ENCODE measurements at regions of chr20 and their contacts with region 1.

Region 1: GRCh38 chr20:32789896-32790750 is 27.9 kb downstream of the DNMT3B start:
- DNase-seq: peak; percentile 50 to 77 (median 68)
- ATAC-seq: peak; percentile 84
- H3K4me3 ChIP-seq: no peak overlapping the region
- H3K4me3 Mint-ChIP-seq: no peak overlapping the region
- H3K27ac ChIP-seq: no peak overlapping the region
- H3K27ac Mint-ChIP-seq: peak overlapping the region in 6 of 9 donors; percentile 6 to 86 (median 16)
- H3K4me1 ChIP-seq: peaks cover 3 to 36% of the 10 kb centered on the region in 2 donors
- H3K4me1 Mint-ChIP-seq: peaks cover 14 to 47% (median 38%) of the 10 kb centered on the region in 7 donors
- H3K27me3 ChIP-seq: no peaks in the 10 kb centered on the region
- H3K27me3 Mint-ChIP-seq: no peaks in the 10 kb centered on the region

Region 2: GRCh38 chr20:32819992-32820710 is 30.0 kb after region 1 on chr20:
- CTCF ChIA-PET with region 1: interaction called, 5 read pairs
- POLR2A ChIA-PET with region 1: interaction called, 11 read pairs
- intact Hi-C with region 1: loop called in 1 of 2 experiments (anchors 1 kb)
- DNase-seq: peak in 7 of 9 donors; percentile 81 to 96 (median 93)
- ATAC-seq: peak; percentile 85
- H3K4me3 ChIP-seq: peak overlapping the region; percentile 93
- H3K4me3 Mint-ChIP-seq: peak overlapping the region; percentile 89 to 99 (median 94)
- H3K27ac ChIP-seq: peak overlapping the region; percentile 85
- H3K27ac Mint-ChIP-seq: peak overlapping the region; percentile 66 to 99 (median 98)
- H3K4me1 ChIP-seq: peaks cover 22 to 34% of the 10 kb centered on the region in 2 donors
- H3K4me1 Mint-ChIP-seq: peaks cover 28 to 49% (median 44%) of the 10 kb centered on the region in 7 donors
- H3K27me3 ChIP-seq: no peaks in the 10 kb centered on the region
- H3K27me3 Mint-ChIP-seq: no peaks in the 10 kb centered on the region

Region 3: GRCh38 chr20:32839982-32840285 is 49.8 kb after region 1 on chr20:
- CTCF ChIA-PET with region 1: interaction called, 8 read pairs
- POLR2A ChIA-PET with region 1: no interaction called
- intact Hi-C with region 1: loop called in 1 of 2 experiments (anchors 2 kb)
- DNase-seq: no peak
- ATAC-seq: no peak
- H3K4me3 ChIP-seq: no peak overlapping the region
- H3K4me3 Mint-ChIP-seq: peak overlapping the region in 1 of 10 donors; percentile 11
- H3K27ac ChIP-seq: no peak overlapping the region
- H3K27ac Mint-ChIP-seq: peak overlapping the region in 8 of 9 donors; percentile 33 to 83 (median 58)
- H3K4me1 ChIP-seq: peaks cover 0 to 14% of the 10 kb centered on the region in 2 donors
- H3K4me1 Mint-ChIP-seq: peaks cover 16 to 69% (median 55%) of the 10 kb centered on the region in 7 donors
- H3K27me3 ChIP-seq: no peaks in the 10 kb centered on the region
- H3K27me3 Mint-ChIP-seq: no peaks in the 10 kb centered on the region

Region 4: GRCh38 chr20:32902456-32903420 is 112.6 kb after region 1 on chr20:
- CTCF ChIA-PET with region 1: interaction called, 9 read pairs
- POLR2A ChIA-PET with region 1: no interaction called
- intact Hi-C with region 1: loop called (anchors 1 to 2 kb)
- DNase-seq: peak; percentile 42 to 76 (median 65)
- ATAC-seq: peak; percentile 89
- H3K4me3 ChIP-seq: no peak overlapping the region
- H3K4me3 Mint-ChIP-seq: peak overlapping the region in 6 of 10 donors; percentile 23 to 68 (median 46)
- H3K27ac ChIP-seq: no peak overlapping the region
- H3K27ac Mint-ChIP-seq: peak overlapping the region in 7 of 9 donors; percentile 43 to 86 (median 75)
- H3K4me1 ChIP-seq: peaks cover 0 to 34% of the 10 kb centered on the region in 2 donors
- H3K4me1 Mint-ChIP-seq: peaks cover 12 to 56% (median 37%) of the 10 kb centered on the region in 7 donors
- H3K27me3 ChIP-seq: no peaks in the 10 kb centered on the region
- H3K27me3 Mint-ChIP-seq: no peaks in the 10 kb centered on the region

Region 5: GRCh38 chr20:33005132-33005566 is 215.0 kb after region 1 on chr20:
- CTCF ChIA-PET with region 1: no interaction called
- POLR2A ChIA-PET with region 1: no interaction called
- intact Hi-C with region 1: loop called in 1 of 2 experiments (anchors 1 kb)
- DNase-seq: peak in 6 of 9 donors; percentile 7 to 41 (median 35)
- ATAC-seq: no peak
- H3K4me3 ChIP-seq: no peak overlapping the region
- H3K4me3 Mint-ChIP-seq: peak overlapping the region in 1 of 10 donors; percentile 38
- H3K27ac ChIP-seq: no peak overlapping the region
- H3K27ac Mint-ChIP-seq: peak overlapping the region in 2 of 9 donors; percentile 42 to 63
- H3K4me1 ChIP-seq: peaks cover 0 to 20% of the 10 kb centered on the region in 2 donors
- H3K4me1 Mint-ChIP-seq: peaks cover 3 to 56% (median 34%) of the 10 kb centered on the region in 7 donors
- H3K27me3 ChIP-seq: no peaks in the 10 kb centered on the region
- H3K27me3 Mint-ChIP-seq: no peaks in the 10 kb centered on the region

Region 6: DNA sequence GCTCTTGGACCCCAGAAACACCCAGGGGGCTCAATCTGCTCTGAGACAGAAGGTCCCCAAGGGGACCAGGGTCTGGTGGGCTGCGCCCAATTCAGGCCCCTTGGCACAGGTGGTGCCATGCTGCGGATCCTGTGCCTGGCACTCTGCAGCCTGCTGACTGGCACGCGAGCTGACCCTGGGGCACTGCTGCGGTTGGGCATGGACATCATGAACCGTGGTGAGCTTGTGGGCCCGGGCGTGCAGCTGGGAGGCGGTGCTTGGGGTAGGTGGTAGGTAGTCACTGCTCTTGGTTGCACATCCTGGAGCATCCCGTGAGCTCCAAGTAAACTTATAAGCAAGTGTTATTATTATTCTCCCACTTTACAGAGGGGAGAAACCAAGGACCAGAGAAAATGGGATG is 241.4 kb after region 1 on chr20 and contains the start of gene BPIFB6:
- CTCF ChIA-PET with region 1: no interaction called
- POLR2A ChIA-PET with region 1: no interaction called
- intact Hi-C with region 1: no loop called
- DNase-seq: no peak
- ATAC-seq: no peak
- H3K4me3 ChIP-seq: no peak within 1 kb of the TSS
- H3K4me3 Mint-ChIP-seq: no peak within 1 kb of the TSS
- H3K27ac ChIP-seq: no peak within 1 kb of the TSS
- H3K27ac Mint-ChIP-seq: peak within 1 kb of the TSS in 1 of 9 donors; percentile 12
- H3K4me1 ChIP-seq: no peaks in the 10 kb centered on the region
- H3K4me1 Mint-ChIP-seq: peaks cover 0 to 5% (median 0%) of the 10 kb centered on the region in 7 donors
- H3K27me3 ChIP-seq: no peaks in the 10 kb centered on the region
- H3K27me3 Mint-ChIP-seq: no peaks in the 10 kb centered on the region
- total RNA-seq, gene BPIFB6: not detected

Region 7: GRCh38 chr20:33211817-33212424 is 421.8 kb after region 1 on chr20:
- CTCF ChIA-PET with region 1: no interaction called
- POLR2A ChIA-PET with region 1: no interaction called
- intact Hi-C with region 1: loop called in 1 of 2 experiments (anchors 5 kb)
- DNase-seq: peak in 5 of 9 donors; percentile 10 to 27 (median 13)
- ATAC-seq: no peak
- H3K4me3 ChIP-seq: no peak overlapping the region
- H3K4me3 Mint-ChIP-seq: no peak overlapping the region
- H3K27ac ChIP-seq: no peak overlapping the region
- H3K27ac Mint-ChIP-seq: no peak overlapping the region
- H3K4me1 ChIP-seq: no peaks in the 10 kb centered on the region
- H3K4me1 Mint-ChIP-seq: peaks cover 0 to 7% (median 2%) of the 10 kb centered on the region in 7 donors
- H3K27me3 ChIP-seq: no peaks in the 10 kb centered on the region
- H3K27me3 Mint-ChIP-seq: peaks cover 30 to 66% (median 60%) of the 10 kb centered on the region in 5 donors

Region 8: DNA sequence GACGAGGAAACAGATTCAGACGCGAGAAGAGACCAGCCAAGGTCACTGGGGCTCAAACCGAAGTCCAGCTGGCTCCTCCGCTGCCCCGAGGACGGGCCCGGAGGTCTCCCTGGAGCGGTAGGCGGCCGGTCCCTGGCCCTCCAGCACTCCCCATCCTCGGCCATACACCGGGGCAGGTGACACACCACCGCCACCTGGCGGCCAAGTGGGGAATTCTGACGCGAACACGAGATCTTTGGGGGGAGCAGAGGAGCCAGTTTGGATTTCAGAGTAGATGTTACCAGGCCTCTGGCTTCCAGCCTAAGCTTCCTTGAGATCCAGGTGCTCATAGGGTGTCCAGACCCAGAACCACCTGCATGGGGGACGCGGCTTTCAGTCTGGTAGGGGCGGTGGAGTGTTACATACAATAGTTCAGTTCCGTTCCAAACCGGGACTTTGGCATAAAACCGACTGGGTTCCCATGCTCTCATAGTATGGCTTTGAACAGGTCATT is 509.0 kb after region 1 on chr20:
- CTCF ChIA-PET with region 1: interaction called, 3 read pairs
- POLR2A ChIA-PET with region 1: no interaction called
- intact Hi-C with region 1: loop called (anchors 1 kb)
- DNase-seq: peak; percentile 48 to 81 (median 70)
- ATAC-seq: peak; percentile 87
- H3K4me3 ChIP-seq: no peak overlapping the region
- H3K4me3 Mint-ChIP-seq: peak overlapping the region in 1 of 10 donors; percentile 8
- H3K27ac ChIP-seq: no peak overlapping the region
- H3K27ac Mint-ChIP-seq: no peak overlapping the region
- H3K4me1 ChIP-seq: peaks cover 0 to 6% of the 10 kb centered on the region in 2 donors
- H3K4me1 Mint-ChIP-seq: peaks cover 0 to 3% (median 0%) of the 10 kb centered on the region in 7 donors
- H3K27me3 ChIP-seq: no peaks in the 10 kb centered on the region
- H3K27me3 Mint-ChIP-seq: peaks cover 4 to 19% (median 12%) of the 10 kb centered on the region in 5 donors

Measured in naive thymus-derived CD4-positive, alpha-beta T cell (primary cell).